Activated CD4-positive, alpha-beta T cell treated with anti-CD3 and anti-CD28 coated beads, Interleukin-2, amount 10 ng/mL, durations not matched to agents 24 days and 14 days (primary cell): ENCODE measurements at regions of chr7 and their contacts with region 1.

Region 1: DNA sequence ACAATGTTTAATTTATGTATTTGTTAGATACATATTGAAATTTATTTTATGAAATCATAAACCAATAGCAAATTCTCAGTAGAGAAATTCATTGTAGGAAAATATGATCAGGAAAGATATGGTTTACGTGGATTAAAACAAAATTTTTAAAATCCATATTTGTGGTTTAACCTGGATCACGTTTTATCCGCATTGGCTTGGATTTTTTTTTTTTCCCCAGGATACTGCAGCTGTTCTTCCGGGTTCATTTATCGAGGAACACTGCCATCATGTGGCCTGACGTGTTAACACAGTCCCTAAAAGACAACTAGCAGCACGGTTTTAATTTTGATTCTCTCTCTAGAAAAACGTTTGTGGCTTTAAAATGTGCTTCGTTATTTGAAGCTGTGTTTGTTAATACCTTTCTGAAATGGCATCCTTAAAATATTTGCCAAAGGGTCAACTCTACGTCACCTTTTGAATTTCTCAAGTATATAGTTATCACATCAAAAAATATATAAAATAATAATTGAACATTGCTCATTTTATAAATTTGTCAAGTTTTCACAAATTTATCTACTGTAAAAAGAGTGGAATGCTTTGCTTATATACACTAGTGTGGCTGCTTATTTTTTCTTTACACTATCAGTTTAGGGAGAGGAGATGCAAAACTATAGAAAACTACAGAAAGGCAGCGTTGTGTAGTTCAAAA is 8.7 kb upstream of the ASB4 start:
- DNase-seq: peak; percentile 83
- H3K4me3 Mint-ChIP-seq: no peak overlapping the region
- H3K27ac Mint-ChIP-seq: no peak overlapping the region
- H3K4me1 Mint-ChIP-seq: no peaks in the 10 kb centered on the region
- H3K27me3 Mint-ChIP-seq: peaks cover 5% of the 10 kb centered on the region

Region 2: DNA sequence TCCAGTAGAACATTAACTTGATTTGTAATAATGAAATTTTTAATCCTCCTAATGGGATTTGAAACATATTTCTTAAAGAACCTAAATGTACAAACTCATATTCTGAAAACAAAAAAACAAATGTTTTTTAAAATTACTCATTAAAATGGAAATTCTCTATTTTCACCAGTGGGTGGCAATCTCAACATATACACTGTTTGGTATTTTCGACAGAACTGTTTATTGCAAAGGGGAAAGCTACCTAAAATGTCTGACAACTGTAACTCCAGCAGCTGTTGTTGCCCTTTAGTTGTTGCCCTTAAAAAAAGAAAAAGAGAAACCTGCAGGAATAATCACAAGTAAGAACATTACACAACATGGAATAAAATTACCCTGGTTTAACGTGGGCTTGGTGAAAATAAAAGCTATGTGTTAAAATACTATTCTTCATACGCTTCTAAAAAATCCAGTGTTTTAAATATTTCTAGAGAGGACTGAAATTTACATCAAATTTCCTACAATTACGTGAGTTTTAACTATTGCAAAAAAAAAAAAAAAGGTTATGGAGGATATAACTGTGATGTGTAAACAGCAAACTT is 1027.8 kb before region 1 on chr7:
- intact Hi-C with region 1: loop called (anchors 2 kb)
- DNase-seq: no peak
- H3K4me3 Mint-ChIP-seq: no peak overlapping the region
- H3K27ac Mint-ChIP-seq: no peak overlapping the region
- H3K4me1 Mint-ChIP-seq: no peaks in the 10 kb centered on the region
- H3K27me3 Mint-ChIP-seq: peaks cover 10% of the 10 kb centered on the region

Region 3: GRCh38 chr7:95199779-95200558 is 277.1 kb before region 1 on chr7:
- intact Hi-C with region 1: loop called (anchors 10 kb)
- DNase-seq: no peak
- H3K4me3 Mint-ChIP-seq: no peak overlapping the region
- H3K27ac Mint-ChIP-seq: no peak overlapping the region
- H3K4me1 Mint-ChIP-seq: no peaks in the 10 kb centered on the region
- H3K27me3 Mint-ChIP-seq: no peaks in the 10 kb centered on the region

Region 4: DNA sequence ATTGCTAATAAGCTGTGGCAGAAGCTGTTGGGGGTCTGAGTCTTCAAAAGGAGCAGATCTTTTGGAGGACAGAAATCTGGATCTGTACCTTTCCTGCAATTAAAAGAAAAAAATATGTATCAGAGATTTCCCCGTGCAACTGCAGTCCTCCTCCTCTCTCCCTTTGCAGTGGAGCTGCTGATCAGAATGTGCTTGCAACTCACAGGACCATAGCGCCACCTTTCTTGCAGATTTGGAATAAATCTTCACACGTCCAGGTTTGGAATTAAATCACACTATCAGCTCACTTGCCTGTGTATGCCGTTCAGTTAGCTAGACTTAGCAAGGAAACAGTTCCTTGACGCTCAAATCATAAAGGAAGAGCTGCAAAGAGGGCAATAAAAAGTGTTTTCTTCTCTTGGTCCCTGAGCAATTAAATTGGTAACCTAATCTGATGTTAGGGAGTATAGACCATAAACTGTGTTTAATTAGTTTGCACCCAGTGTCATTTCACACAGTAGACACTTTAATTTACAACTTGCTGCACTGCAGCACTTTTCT is 230.1 kb before region 1 on chr7:
- intact Hi-C with region 1: loop called (anchors 10 kb)
- DNase-seq: peak; percentile 66
- H3K4me3 Mint-ChIP-seq: no peak overlapping the region
- H3K27ac Mint-ChIP-seq: no peak overlapping the region
- H3K4me1 Mint-ChIP-seq: no peaks in the 10 kb centered on the region
- H3K27me3 Mint-ChIP-seq: peaks cover 3% of the 10 kb centered on the region

Region 5: GRCh38 chr7:95330204-95330960 is 146.7 kb before region 1 on chr7:
- intact Hi-C with region 1: no loop called
- DNase-seq: peak; percentile 68
- H3K4me3 Mint-ChIP-seq: peak overlapping the region; percentile 67
- H3K27ac Mint-ChIP-seq: peak overlapping the region; percentile 6
- H3K4me1 Mint-ChIP-seq: peaks cover 11% of the 10 kb centered on the region
- H3K27me3 Mint-ChIP-seq: peaks cover 11% of the 10 kb centered on the region

Region 6: DNA sequence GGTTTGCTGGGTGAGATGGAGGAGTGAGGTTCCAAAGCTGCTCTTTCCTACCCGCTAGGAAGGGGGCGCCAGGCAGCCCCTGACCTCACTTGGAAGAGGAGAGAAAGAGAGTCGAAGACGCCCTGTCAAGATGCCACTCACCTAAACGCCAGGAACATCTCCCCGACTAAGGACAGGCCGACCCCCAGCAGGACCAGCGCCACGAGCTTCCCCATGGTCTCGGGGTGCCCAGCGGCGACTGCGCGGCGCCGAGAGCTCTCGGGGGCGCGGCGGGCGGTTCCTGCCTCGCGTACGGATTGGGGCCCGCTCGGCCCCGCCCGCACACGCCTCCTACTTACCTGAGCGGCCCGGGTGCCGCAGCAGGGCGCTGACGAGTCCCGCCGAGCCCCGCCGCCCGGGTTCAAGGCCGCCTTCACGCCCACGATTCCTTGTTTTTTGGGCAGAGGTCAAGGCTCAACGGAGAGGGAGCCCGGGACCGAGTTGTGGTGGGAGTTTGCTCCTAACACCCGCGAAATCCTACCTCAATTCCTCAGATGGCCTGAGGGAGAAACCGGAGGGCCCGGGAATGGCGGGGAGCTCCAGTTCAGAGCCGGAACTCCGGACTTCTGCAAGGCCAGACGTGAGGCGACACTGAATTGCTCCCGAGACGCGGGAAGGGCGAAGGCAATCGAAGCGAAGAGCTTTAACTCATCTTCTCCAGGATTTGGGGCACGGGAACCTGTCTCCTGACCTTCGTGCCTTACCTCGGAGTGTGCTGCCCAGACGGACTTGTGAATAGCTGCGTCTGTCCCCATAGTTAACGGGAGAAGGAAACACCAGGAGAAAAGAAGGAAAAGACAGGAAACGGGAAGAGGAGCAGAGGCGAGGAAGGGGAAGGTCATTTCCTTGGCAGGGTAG is 80.7 kb before region 1 on chr7 and contains the start of gene PON3:
- intact Hi-C with region 1: loop called (anchors 10 kb)
- DNase-seq: peak; percentile 65
- H3K4me3 Mint-ChIP-seq: peak within 1 kb of the TSS; percentile 67
- H3K27ac Mint-ChIP-seq: no peak within 1 kb of the TSS
- H3K4me1 Mint-ChIP-seq: peaks cover 3% of the 10 kb centered on the region
- H3K27me3 Mint-ChIP-seq: peaks cover 41% of the 10 kb centered on the region
- total RNA-seq, gene PON3: not detected in 2 replicates

Region 7: DNA sequence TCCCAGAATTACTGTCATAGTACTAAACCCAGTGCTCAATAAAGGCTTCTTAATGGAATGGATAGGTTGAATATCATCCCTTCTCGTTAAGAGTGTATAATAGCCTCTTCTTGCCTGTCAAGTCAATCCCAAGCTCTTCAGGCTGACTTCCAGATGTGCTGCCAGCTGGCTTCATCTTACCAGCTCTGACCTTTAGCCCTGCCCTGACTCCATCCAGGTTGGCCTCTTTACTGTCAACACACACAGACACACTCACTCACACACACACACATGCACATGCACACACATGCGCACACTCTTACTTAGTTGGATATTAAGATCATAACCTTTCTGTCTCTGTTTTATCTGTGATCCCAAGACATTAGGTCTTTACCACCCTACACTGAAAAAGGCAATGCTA is 57.7 kb after region 1 on chr7:
- intact Hi-C with region 1: no loop called
- DNase-seq: no peak
- H3K4me3 Mint-ChIP-seq: no peak overlapping the region
- H3K27ac Mint-ChIP-seq: no peak overlapping the region
- H3K4me1 Mint-ChIP-seq: no peaks in the 10 kb centered on the region
- H3K27me3 Mint-ChIP-seq: peaks cover 15% of the 10 kb centered on the region